ENCODE measurements at regions of chr6 and their contacts with region 1.

Region 1: DNA sequence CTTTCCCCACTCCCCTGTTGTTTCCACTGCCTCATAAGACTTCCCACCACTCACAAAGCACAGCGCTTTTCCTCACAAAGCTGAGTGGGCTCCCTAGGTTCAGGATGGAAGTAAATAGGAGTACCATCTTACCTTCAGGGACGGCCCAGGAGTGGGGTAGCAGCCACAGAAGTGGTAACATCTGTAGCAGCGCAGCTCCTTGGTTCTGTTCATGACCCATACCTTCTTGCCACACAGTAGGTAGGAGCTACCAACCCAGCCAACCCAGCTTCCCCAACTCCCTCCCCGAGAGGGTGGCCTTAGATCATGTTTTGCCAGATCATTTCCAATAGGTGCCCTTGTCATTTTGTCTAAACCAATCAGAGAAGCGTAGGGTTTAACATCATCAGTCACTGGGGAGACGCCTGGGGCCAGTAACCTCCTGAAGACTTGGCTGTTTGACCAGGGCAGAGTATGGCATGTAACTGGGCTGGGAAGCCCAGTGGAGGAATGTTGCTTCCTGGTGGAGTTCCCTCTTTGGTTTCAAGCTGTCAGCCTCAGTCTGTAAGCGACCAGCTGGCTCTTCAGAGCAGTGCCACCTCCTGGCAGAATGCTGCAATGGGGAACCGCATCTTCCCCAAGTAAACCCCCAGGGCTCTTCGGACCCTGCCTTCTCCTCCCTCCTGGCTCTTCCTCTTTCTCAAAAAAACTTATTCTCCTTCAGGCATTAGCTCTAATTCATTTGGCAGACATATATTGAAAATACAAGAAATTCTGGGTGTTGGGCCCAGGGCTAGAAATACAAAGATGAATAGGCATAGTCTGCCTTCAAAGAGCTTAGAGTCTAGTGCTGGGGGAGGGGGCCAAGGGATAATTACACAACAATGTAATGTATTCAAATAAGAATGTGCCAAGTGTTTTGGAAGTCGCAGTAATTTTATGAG is at the start of gene HLA-DMA:
- DNase-seq: peak; percentile 83
- ATAC-seq: peak; percentile 96
- H3K4me3 Mint-ChIP-seq: peak within 1 kb of the TSS; percentile 76
- H3K27ac Mint-ChIP-seq: peak within 1 kb of the TSS; percentile 77
- H3K4me1 Mint-ChIP-seq: peaks cover 65% of the 10 kb centered on the region
- H3K27me3 Mint-ChIP-seq: no peaks in the 10 kb centered on the region
- CTCF ChIP-seq: peak; percentile 98
- total RNA-seq, gene HLA-DMA: 16.2 TPM

Region 2: DNA sequence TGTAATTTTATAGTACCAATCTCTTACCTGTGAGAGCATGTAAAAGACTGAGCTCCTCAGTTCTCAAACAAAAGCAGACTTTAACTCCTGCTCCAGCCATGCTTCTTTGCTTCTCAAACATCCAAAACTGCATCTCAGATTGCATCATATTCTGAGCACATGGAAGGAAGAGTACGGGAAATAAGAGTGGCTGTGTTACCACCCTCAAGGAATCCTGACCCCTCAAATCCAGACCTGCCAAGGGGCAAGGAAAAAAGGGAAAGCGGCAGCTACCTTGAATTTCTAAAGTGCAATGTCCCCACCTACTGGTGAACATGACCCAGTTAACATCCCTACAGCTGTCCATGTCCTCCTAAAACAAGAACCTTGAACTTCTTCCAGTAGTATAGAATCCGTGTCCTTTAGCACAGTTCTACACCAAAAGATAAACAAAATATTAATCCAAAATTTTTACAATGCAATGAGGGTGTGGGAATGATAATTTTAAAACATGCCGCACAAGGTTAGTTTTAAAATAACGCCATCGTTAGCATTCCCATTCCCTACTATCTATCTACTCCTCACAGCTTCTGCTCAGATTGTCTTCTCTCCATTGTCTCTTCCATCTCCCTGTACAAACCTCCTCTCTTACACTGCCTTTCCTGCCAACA is 252.6 kb before region 1 on chr6:
- CTCF ChIA-PET with region 1: no interaction called
- POLR2A ChIA-PET with region 1: no interaction called
- intact Hi-C with region 1: no loop called
- DNase-seq: peak; percentile 22
- ATAC-seq: peak; percentile 42
- H3K4me3 Mint-ChIP-seq: no peak overlapping the region
- H3K27ac Mint-ChIP-seq: no peak overlapping the region
- H3K4me1 Mint-ChIP-seq: no peaks in the 10 kb centered on the region
- H3K27me3 Mint-ChIP-seq: peaks cover 30% of the 10 kb centered on the region
- CTCF ChIP-seq: peak; percentile 89

Region 3: GRCh38 chr6:32879691-32880090 is 73.4 kb before region 1 on chr6:
- CTCF ChIA-PET with region 1: interaction called, 15 read pairs
- POLR2A ChIA-PET with region 1: no interaction called
- intact Hi-C with region 1: no loop called
- DNase-seq: no peak
- ATAC-seq: no peak
- H3K4me3 Mint-ChIP-seq: no peak overlapping the region
- H3K27ac Mint-ChIP-seq: no peak overlapping the region
- H3K4me1 Mint-ChIP-seq: peaks cover 6% of the 10 kb centered on the region
- H3K27me3 Mint-ChIP-seq: no peaks in the 10 kb centered on the region
- CTCF ChIP-seq: no peak

Region 4: DNA sequence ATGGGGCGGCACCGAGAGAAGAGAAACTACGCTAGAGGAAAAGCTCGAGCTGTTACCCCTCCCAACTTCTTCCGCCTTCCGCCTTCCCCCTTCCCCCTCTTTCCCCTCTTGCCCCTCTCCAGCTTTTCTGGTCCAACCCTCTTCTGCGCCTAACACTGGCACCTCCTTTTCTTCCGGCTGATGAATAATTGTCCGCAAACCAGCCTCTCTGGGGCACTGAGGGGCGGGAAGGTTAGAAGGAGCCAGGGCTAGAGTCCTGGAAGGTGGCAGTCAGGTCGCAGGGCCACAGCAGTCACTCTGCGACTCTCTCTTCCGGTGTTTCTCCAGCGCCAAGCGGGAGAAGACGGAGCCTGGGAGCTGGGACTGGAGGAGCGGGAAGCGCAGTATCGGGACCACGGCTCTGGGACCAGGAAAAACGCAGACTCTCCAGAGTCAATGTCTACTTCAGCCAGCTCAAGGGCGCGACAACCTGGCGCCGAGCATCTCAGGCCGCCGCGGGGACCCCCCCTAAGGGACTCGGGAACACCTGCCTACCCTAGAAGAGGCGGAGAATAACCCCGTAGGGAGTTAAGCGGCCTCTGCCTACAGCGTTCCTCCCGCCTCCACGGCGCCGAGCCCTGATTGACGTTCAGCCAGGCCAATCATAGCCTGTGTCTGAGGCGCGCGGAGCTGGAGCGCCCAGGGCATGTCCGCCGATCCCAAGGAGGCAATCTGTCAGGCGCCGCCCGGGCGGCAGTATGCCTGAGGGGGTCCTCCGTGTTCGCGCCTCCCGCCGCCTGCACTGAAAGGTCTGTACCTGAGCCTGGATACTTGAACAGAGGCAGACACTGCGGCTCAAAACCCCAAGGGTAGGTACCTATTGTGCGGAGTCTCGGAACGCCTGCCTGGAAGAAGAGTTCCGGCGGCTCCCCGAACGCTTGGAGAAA is 58.7 kb before region 1 on chr6:
- CTCF ChIA-PET with region 1: interaction called, 25 read pairs
- POLR2A ChIA-PET with region 1: interaction called, 10 read pairs
- intact Hi-C with region 1: loop called (anchors 5 kb)
- DNase-seq: peak; percentile 95
- ATAC-seq: peak; percentile 99
- H3K4me3 Mint-ChIP-seq: peak overlapping the region; percentile 96
- H3K27ac Mint-ChIP-seq: peak overlapping the region; percentile 96
- H3K4me1 Mint-ChIP-seq: peaks cover 35% of the 10 kb centered on the region
- H3K27me3 Mint-ChIP-seq: no peaks in the 10 kb centered on the region
- CTCF ChIP-seq: no peak

Region 5: DNA sequence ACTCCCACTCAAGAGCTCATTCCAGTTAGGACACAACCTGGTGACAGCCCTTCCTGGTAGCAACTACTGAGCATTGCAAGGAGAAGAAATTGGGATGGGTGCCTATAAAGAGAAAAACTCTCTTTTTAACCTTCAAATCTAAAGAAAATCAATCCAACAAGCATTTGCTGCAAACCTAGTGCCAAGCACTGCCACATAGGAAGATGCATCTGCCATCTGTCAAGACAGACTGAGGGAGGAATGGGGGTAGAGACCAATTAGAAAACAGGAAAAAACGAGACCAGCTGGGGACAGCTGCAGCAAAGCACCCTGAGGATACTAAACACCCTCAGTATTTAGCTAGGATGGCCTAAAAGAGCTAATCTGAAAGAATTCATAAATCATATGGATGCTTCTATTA is 40.1 kb before region 1 on chr6:
- CTCF ChIA-PET with region 1: interaction called, 34 read pairs
- POLR2A ChIA-PET with region 1: no interaction called
- intact Hi-C with region 1: no loop called
- DNase-seq: no peak
- ATAC-seq: no peak
- H3K4me3 Mint-ChIP-seq: no peak overlapping the region
- H3K27ac Mint-ChIP-seq: no peak overlapping the region
- H3K4me1 Mint-ChIP-seq: no peaks in the 10 kb centered on the region
- H3K27me3 Mint-ChIP-seq: peaks cover 8% of the 10 kb centered on the region
- CTCF ChIP-seq: no peak

Region 6: DNA sequence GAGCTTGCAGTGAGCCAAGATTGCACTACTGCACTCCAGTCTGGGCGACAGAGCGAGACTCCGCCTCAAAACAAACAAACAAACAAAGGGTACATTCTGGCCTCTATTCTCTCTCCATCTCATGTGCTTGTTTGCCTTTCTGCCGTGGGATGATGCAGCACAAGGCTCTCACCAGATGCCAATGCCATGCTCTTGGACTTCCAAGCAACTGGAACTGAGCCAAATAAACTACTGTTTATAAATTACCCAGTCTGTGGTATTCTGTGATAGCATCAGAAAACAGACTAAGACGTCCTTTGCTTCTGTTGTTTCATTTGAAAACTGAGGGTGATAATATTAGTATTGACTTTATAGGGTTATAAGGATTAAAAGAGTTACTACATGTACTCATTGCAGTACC is 11.7 kb after region 1 on chr6:
- CTCF ChIA-PET with region 1: interaction called, 246 read pairs
- POLR2A ChIA-PET with region 1: interaction called, 852 read pairs
- intact Hi-C with region 1: no loop called
- DNase-seq: no peak
- ATAC-seq: no peak
- H3K4me3 Mint-ChIP-seq: no peak overlapping the region
- H3K27ac Mint-ChIP-seq: no peak overlapping the region
- H3K4me1 Mint-ChIP-seq: peaks cover 47% of the 10 kb centered on the region
- H3K27me3 Mint-ChIP-seq: no peaks in the 10 kb centered on the region
- CTCF ChIP-seq: no peak

Region 7: DNA sequence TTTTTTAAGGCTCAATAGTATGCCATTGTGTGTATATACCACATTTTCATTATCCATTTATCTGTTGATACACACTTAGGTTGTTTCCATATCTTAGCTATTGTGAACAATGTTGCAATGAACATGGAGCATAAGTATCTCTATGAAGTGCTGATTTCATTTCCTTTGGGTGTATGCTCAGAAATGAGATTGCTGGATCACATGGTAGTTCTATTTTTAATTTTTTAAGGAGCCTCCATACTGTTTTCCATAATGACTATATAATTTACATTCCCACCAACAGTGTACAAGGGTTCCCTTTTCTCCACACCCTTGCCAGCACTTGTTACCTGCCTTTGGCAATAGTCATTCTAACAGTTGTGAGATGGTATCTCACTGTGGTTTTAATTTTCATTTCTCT is 71.4 kb after region 1 on chr6:
- CTCF ChIA-PET with region 1: no interaction called
- POLR2A ChIA-PET with region 1: no interaction called
- intact Hi-C with region 1: no loop called
- DNase-seq: no peak
- ATAC-seq: no peak
- H3K4me3 Mint-ChIP-seq: no peak overlapping the region
- H3K27ac Mint-ChIP-seq: no peak overlapping the region
- H3K4me1 Mint-ChIP-seq: peaks cover 14% of the 10 kb centered on the region
- H3K27me3 Mint-ChIP-seq: no peaks in the 10 kb centered on the region
- CTCF ChIP-seq: no peak

Region 8: DNA sequence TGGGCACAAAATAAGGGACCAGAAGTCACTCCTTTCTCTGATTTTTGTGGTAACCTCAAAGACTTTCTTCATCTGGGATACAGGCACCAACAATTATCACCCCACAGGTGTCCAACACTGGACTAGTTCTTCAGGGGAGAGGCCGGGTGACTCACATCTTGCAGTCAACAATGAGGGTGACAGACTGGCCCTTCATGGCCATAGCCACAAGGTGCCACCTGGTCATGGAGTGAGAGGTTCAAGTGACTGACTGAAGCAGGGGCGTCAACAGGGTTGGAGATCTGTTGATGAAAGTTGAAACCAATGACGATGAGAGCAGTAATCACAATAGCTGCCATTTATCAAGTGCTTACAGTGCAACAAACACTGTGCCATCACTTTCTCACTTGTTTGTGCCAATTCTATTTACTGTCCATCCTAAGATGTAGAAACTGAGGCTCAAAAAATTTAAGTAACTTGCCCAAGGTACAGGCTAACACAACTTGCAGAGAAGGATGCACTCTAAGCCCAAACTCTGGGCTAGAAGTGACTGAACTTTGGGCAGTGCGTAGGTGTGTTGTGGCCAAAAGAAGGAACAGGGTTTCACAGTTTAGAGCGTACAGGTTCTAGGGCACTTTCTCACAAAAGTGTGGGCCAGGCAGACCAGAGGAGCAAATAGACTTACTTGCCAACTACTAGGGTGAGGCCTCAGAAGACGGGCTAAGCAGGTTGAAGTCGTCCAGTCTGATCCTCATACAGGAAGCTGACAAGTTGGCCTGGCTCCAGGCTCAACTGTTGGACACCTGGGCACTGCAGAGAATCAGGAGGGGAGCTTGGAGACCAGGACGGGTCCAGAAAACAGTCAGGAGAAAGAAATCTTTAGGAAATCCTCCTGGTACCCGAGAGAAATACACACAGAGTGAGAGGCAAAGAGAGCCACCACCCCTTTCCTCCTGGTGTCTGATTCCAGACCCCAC is 153.1 kb after region 1 on chr6:
- CTCF ChIA-PET with region 1: no interaction called
- POLR2A ChIA-PET with region 1: no interaction called
- intact Hi-C with region 1: no loop called
- DNase-seq: no peak
- ATAC-seq: peak; percentile 37
- H3K4me3 Mint-ChIP-seq: no peak overlapping the region
- H3K27ac Mint-ChIP-seq: no peak overlapping the region
- H3K4me1 Mint-ChIP-seq: no peaks in the 10 kb centered on the region
- H3K27me3 Mint-ChIP-seq: peaks cover 45% of the 10 kb centered on the region
- CTCF ChIP-seq: no peak

Region 9: GRCh38 chr6:33170176-33171015 is 217.3 kb after region 1 on chr6:
- CTCF ChIA-PET with region 1: no interaction called
- POLR2A ChIA-PET with region 1: no interaction called
- intact Hi-C with region 1: no loop called
- DNase-seq: no peak
- ATAC-seq: no peak
- H3K4me3 Mint-ChIP-seq: no peak overlapping the region
- H3K27ac Mint-ChIP-seq: no peak overlapping the region
- H3K4me1 Mint-ChIP-seq: no peaks in the 10 kb centered on the region
- H3K27me3 Mint-ChIP-seq: no peaks in the 10 kb centered on the region
- CTCF ChIP-seq: no peak

Measured in activated CD8-positive, alpha-beta T cell treated with anti-CD3 and anti-CD28 coated beads for 36 hours (primary cell).